Mammary epithelial cell (primary cell): ENCODE measurements at regions of chr16 and their contacts with region 1.

Region 1: DNA sequence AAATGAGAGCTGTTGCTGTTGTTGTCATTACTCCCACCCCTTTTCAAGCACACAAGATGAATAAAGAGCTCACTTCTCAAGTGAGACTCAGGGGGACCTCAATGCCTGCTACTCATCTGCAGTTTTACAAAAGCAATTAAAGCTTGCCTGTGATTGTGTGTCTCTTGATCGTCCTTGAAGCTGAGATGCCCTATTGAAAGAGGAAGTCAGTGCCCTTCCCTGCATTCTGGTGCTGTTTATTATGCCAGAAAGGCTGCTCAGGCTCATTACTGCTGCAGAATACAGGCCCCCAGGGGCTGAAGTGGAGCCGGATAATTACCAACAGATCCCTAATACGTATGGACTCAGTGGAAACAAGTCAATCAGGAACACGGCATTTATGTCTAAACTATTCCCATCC is 147.2 kb downstream of the HS3ST2 start:
- DNase-seq: no peak
- H3K4me3 ChIP-seq: no peak overlapping the region
- H3K27ac ChIP-seq: no peak overlapping the region
- H3K4me1 ChIP-seq: no peaks in the 10 kb centered on the region
- H3K27me3 ChIP-seq: peaks cover 5% of the 10 kb centered on the region
- CTCF ChIP-seq: no peak

Region 2: GRCh38 chr16:22888791-22889190 is 72.4 kb before region 1 on chr16:
- CTCF ChIA-PET with region 1: interaction called, 10 read pairs
- dilution Hi-C with region 1: no loop called
- in situ Hi-C with region 1: no loop called
- intact Hi-C with region 1: no loop called
- DNase-seq: no peak
- H3K4me3 ChIP-seq: no peak overlapping the region
- H3K27ac ChIP-seq: no peak overlapping the region
- H3K4me1 ChIP-seq: no peaks in the 10 kb centered on the region
- H3K27me3 ChIP-seq: no peaks in the 10 kb centered on the region
- CTCF ChIP-seq: no peak

Region 3: GRCh38 chr16:22912654-22913053 is 48.6 kb before region 1 on chr16:
- CTCF ChIA-PET with region 1: no interaction called
- dilution Hi-C with region 1: loop called (anchors 5 kb)
- in situ Hi-C with region 1: no loop called
- intact Hi-C with region 1: no loop called
- DNase-seq: no peak
- H3K4me3 ChIP-seq: no peak overlapping the region
- H3K27ac ChIP-seq: no peak overlapping the region
- H3K4me1 ChIP-seq: no peaks in the 10 kb centered on the region
- H3K27me3 ChIP-seq: no peaks in the 10 kb centered on the region
- CTCF ChIP-seq: no peak

Region 4: GRCh38 chr16:23020084-23020483 is 58.9 kb after region 1 on chr16:
- CTCF ChIA-PET with region 1: no interaction called
- dilution Hi-C with region 1: loop called (anchors 5 kb)
- in situ Hi-C with region 1: no loop called
- intact Hi-C with region 1: no loop called
- DNase-seq: no peak
- H3K4me3 ChIP-seq: no peak overlapping the region
- H3K27ac ChIP-seq: no peak overlapping the region
- H3K4me1 ChIP-seq: no peaks in the 10 kb centered on the region
- H3K27me3 ChIP-seq: no peaks in the 10 kb centered on the region
- CTCF ChIP-seq: no peak